GM23248 (cell line): ENCODE measurements at regions of chr4 and their contacts with region 1.

Region 1: DNA sequence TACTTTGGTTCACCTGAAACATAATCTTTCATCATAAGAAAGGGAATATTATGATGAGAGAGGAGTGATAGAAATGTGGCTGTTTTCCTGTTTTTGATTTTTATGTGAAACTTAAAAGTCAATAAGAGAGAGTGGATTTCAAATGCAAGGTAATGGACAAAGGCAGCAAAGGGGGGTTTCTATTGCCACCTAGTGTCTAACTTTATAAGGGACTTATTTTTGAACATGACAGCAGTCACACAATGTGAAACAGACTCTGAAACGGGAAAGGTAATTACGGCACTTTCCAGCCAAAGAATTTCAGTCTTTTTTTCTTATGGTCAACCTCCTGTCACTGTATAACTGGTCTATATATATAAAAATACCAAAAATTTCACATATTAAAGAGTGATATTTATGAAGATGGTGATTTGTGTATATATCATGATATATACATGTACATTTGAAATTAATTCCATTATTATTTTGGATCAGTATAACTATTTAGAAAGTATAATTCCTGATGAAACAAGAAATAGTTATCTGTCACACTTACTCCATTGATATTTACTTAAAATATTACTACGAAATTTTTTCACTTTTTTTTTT is 127.1 kb downstream of the FBXO8 start:
- DNase-seq: peak; percentile 63
- H3K4me3 ChIP-seq: peak overlapping the region; percentile 28; the same call in 1 of the 2 replicates
- H3K27ac ChIP-seq: no peak overlapping the region
- H3K4me1 ChIP-seq: no peaks in the 10 kb centered on the region
- H3K27me3 ChIP-seq: no peaks in the 10 kb centered on the region

Region 2: DNA sequence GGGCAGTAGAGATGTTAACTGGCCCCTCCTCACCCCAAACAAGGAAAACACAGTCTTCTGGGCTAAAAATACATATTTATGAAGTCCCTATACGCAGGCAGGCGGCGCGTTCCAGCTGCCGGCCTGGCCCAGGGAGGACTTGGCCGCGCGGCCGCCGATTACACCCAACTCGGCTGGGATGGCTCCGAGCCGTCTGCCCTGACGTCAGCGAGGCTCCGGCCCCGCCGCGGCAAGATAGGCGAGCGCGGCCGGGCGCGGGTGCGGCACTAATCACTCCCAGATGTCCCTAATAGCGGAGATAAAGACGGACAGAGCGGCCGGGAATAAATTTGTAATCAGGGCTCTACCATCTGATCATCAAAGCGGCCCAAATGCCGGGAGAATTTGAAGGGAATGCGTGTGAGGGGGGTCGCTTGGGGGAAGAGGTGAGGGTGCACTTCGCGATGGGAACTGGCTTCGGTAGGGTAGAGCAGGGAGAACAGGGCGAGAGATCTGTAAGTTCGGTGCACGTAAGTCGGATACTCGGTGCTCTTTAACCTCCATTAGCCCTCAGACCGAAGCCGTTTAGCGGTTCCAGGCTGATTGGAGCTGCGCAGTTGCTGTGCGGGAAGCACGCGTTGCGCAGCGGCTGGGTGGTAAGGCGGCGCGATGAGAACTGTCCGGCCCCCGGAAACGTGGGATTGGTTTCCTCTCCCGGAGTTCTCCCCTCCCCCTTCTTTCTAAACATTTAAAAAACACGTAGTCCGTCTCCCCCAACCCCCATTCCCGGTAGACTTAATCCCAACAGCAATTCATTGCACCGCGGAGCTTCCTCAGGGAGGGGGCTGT is 634.0 kb before region 1 on chr4:
- in situ Hi-C with region 1: loop called (anchors 10 kb)
- DNase-seq: peak; percentile 99
- H3K4me3 ChIP-seq: peak overlapping the region; percentile 97
- H3K27ac ChIP-seq: peak overlapping the region; percentile 100
- H3K4me1 ChIP-seq: peaks cover 45% of the 10 kb centered on the region
- H3K27me3 ChIP-seq: no peaks in the 10 kb centered on the region